ENCODE measurements at regions of chr10 and their contacts with region 1.

Region 1: GRCh38 chr10:118754720-118755480 is at the start of gene CACUL1:
- DNase-seq: peak; percentile 99
- ATAC-seq: peak; percentile 98
- H3K4me3 Mint-ChIP-seq: peak within 1 kb of the TSS; percentile 91
- H3K27ac Mint-ChIP-seq: peak within 1 kb of the TSS; percentile 78
- H3K4me1 Mint-ChIP-seq: peaks cover 38% of the 10 kb centered on the region
- H3K27me3 Mint-ChIP-seq: peaks cover 3% of the 10 kb centered on the region
- CTCF ChIP-seq: no peak
- total RNA-seq, gene CACUL1: 19.8 and 27.1 TPM in 2 replicates

Region 2: DNA sequence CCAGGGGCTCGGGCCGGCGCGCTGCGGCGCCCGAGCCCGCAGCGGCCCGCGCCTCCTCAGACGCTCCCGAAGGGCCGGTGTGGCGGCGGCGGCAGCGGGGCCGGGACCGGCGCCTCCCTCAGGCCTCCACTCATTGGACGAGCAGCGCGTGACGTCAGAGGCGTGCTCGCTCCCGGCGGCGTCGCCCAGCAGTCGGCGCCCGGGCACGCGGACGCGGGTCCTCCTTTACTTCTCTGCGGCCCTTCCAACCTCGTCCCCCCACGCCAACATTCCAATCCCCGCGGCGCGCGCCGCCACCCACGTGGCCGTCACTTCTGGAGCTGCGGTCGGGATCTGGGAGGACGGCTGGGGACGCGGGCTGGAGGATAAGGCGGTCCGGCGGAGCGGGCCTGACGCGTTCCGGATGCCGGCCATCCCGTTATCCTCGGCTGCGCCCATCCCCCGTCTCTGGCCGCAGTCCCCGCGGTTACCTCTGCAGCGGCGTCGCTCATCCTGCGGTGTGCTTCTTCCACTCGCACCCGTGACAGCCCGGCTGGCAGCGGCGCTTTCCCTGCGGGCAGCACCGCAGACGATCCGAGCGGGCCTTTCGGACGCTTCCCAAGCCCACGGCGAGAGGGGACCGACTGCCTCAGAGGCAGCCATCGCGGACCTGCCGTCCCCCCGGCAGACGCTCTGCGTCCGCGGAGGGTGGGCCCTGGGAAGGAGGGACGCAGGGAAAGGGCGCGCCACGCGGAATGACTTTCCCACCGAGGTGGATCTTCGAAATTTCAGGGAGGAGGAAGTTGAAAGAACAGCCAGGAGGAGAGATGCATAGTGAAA is 1379.3 kb before region 1 on chr10 and contains the start of gene PDZD8:
- CTCF ChIA-PET with region 1: no interaction called
- POLR2A ChIA-PET with region 1: no interaction called
- intact Hi-C with region 1: loop called (anchors 10 kb)
- DNase-seq: peak; percentile 96
- ATAC-seq: peak; percentile 89
- H3K4me3 Mint-ChIP-seq: peak within 1 kb of the TSS; percentile 93
- H3K27ac Mint-ChIP-seq: peak within 1 kb of the TSS; percentile 75
- H3K4me1 Mint-ChIP-seq: peaks cover 35% of the 10 kb centered on the region
- H3K27me3 Mint-ChIP-seq: peaks cover 17% of the 10 kb centered on the region
- CTCF ChIP-seq: no peak
- total RNA-seq, gene PDZD8: 13.2 and 13.7 TPM in 2 replicates

Region 3: DNA sequence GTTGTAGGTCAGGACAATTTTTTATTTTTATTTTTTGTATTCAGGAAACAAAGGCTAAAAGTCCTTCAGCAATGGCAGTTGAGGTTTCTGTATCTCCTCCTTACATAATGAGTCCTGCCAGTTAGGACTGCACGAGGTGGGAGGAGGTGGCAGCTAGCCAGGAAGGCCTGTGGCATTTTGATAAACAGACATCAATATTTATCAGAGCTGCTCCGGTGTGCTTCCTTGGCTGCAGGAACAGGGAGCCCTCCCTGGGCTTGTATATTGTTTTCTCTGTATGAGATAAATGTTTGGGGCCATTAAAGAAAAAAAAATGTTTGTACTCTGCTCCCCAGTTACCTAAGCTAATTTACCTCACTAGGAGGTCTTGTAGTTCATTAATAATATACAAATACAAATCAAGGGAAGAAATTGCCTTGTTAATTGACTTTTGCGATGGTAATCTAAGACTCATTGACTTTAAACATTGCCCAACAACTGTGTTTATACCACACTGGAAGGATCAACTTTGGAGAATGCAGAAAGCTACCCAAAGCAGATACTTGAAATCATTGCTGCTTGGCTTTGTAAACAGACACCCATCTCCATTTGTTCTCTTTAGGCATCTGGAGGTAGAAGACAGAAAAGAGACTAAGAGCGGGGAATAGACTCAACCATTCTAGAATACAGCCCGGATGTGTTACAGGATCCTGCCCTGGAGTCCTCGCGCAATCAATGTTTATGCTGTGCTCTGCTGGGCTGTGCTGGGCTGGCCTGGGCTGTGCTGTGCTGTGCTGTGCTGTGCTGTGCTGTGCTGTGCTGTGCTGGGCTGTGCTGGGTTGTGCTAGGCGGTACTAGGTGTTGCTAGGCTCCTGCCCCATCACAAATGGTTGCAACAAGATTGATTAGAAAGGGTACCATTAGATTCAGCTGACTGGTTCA is 1343.2 kb before region 1 on chr10:
- CTCF ChIA-PET with region 1: no interaction called
- POLR2A ChIA-PET with region 1: no interaction called
- intact Hi-C with region 1: no loop called
- DNase-seq: no peak
- ATAC-seq: no peak
- H3K4me3 Mint-ChIP-seq: no peak overlapping the region
- H3K27ac Mint-ChIP-seq: no peak overlapping the region
- H3K4me1 Mint-ChIP-seq: no peaks in the 10 kb centered on the region
- H3K27me3 Mint-ChIP-seq: peaks cover 17% of the 10 kb centered on the region
- CTCF ChIP-seq: no peak

Region 4: GRCh38 chr10:118341791-118342637 is 412.9 kb before region 1 on chr10 and contains the start of gene FAM204A:
- CTCF ChIA-PET with region 1: no interaction called
- POLR2A ChIA-PET with region 1: no interaction called
- intact Hi-C with region 1: loop called (anchors 1 kb)
- DNase-seq: peak; percentile 93
- ATAC-seq: peak; percentile 98
- H3K4me3 Mint-ChIP-seq: peak within 1 kb of the TSS; percentile 96
- H3K27ac Mint-ChIP-seq: peak within 1 kb of the TSS; percentile 96
- H3K4me1 Mint-ChIP-seq: peaks cover 46% of the 10 kb centered on the region
- H3K27me3 Mint-ChIP-seq: peaks cover 2% of the 10 kb centered on the region
- CTCF ChIP-seq: no peak
- total RNA-seq, gene FAM204A: 70.1 and 71.8 TPM in 2 replicates

Region 5: GRCh38 chr10:118729641-118730258 is 25.1 kb before region 1 on chr10:
- CTCF ChIA-PET with region 1: interaction called, 3 read pairs
- POLR2A ChIA-PET with region 1: interaction called, 16 read pairs
- intact Hi-C with region 1: loop called (anchors 1 kb)
- DNase-seq: no peak
- ATAC-seq: peak; percentile 96
- H3K4me3 Mint-ChIP-seq: peak overlapping the region; percentile 63
- H3K27ac Mint-ChIP-seq: peak overlapping the region; percentile 80
- H3K4me1 Mint-ChIP-seq: peaks cover 53% of the 10 kb centered on the region
- H3K27me3 Mint-ChIP-seq: no peaks in the 10 kb centered on the region
- CTCF ChIP-seq: no peak

Region 6: GRCh38 chr10:119030421-119031250 is 275.7 kb after region 1 on chr10:
- CTCF ChIA-PET with region 1: no interaction called
- POLR2A ChIA-PET with region 1: interaction called, 5 read pairs
- intact Hi-C with region 1: loop called (anchors 2 kb)
- DNase-seq: peak; percentile 72
- ATAC-seq: peak; percentile 80
- H3K4me3 Mint-ChIP-seq: peak overlapping the region; percentile 75
- H3K27ac Mint-ChIP-seq: peak overlapping the region; percentile 68
- H3K4me1 Mint-ChIP-seq: peaks cover 22% of the 10 kb centered on the region
- H3K27me3 Mint-ChIP-seq: peaks cover 23% of the 10 kb centered on the region
- CTCF ChIP-seq: no peak

Region 7: DNA sequence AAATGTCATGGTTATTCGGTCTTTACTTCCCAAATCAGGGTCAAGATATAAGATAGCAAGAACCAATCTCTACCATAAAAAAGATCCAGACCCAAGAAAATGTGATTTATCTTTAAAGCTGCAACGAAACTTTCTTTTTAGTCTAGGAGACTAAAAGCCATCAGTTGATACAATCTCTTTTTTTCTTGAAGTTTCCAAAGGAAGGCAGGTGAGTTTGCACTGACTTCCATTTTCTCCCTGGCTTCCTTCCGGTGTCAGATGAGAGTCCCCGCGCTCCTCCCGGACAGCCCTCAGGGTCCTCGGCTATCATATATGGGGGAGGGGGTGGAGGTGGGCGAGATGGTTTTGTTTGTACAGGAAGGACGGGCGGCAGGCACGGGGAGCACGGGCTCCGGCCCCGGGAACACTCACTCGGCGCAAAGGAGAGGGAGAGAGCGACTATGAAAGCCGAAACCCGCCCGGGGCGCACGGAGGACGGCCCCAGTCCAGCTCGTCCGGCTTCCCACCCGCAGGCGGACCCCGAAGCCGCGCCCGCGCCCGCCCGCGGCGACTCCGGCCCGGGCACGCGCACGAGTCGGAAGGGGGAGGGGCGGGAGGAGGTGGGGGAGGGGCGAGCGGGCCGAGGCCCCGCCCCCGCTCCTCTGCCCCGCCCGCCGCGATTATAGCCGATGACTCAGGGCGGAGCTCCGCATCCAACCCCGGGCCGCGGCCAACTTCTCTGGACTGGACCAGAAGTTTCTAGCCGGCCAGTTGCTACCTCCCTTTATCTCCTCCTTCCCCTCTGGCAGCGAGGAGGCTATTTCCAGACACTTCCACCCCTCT is 896.0 kb after region 1 on chr10 and contains the start of gene BAG3:
- CTCF ChIA-PET with region 1: no interaction called
- POLR2A ChIA-PET with region 1: no interaction called
- intact Hi-C with region 1: loop called (anchors 5 kb)
- DNase-seq: peak; percentile 73
- ATAC-seq: peak; percentile 93
- H3K4me3 Mint-ChIP-seq: peak within 1 kb of the TSS; percentile 97
- H3K27ac Mint-ChIP-seq: peak within 1 kb of the TSS; percentile 95
- H3K4me1 Mint-ChIP-seq: peaks cover 16% of the 10 kb centered on the region
- H3K27me3 Mint-ChIP-seq: no peaks in the 10 kb centered on the region
- CTCF ChIP-seq: no peak
- total RNA-seq, gene BAG3: 4.3 and 4.7 TPM in 2 replicates

Measured in activated B cell treated with CpG ODN at 0.5 μM for 24 hours (primary cell).